Left cardiac atrium (tissue), 4 donors: ENCODE measurements at regions of chr3 and their contacts with region 1.

Region 1: GRCh38 chr3:109023656-109024254 is 70.1 kb upstream of the GUCA1C start:
- DNase-seq: peak; percentile 32
- ATAC-seq: no peak

Region 2: GRCh38 chr3:109071350-109072142 is 47.8 kb after region 1 on chr3:
- intact Hi-C with region 1: loop called in 1 of 2 experiments (anchors 5 kb)
- DNase-seq: no peak
- ATAC-seq: no peak